ENCODE measurements at regions of chr3 and their contacts with region 1.

Region 1: GRCh38 chr3:50192689-50193141 is 1.3 kb downstream of the GNAT1 start:
- DNase-seq: peak; percentile 54
- ATAC-seq: no peak
- H3K4me3 ChIP-seq: no peak overlapping the region
- H3K27ac ChIP-seq: no peak overlapping the region
- H3K4me1 ChIP-seq: peaks cover 54% of the 10 kb centered on the region
- H3K27me3 ChIP-seq: no peaks in the 10 kb centered on the region
- CTCF ChIP-seq: peak; percentile 91
- EP300 ChIP-seq: no peak
- POLR2A ChIP-seq: no peak
- RAD21 ChIP-seq: peak; percentile 94

Region 2: GRCh38 chr3:50121416-50122032 is 71.2 kb before region 1 on chr3:
- CTCF ChIA-PET with region 1: interaction called, 50 read pairs
- POLR2A ChIA-PET with region 1: interaction called, 4 read pairs
- in situ Hi-C with region 1: loop called (anchors 5 kb)
- intact Hi-C with region 1: loop called (anchors 1 kb)
- DNase-seq: peak; percentile 70
- ATAC-seq: peak; percentile 80
- H3K4me3 ChIP-seq: no peak overlapping the region
- H3K27ac ChIP-seq: no peak overlapping the region
- H3K4me1 ChIP-seq: peaks cover 16% of the 10 kb centered on the region
- H3K27me3 ChIP-seq: peaks cover 0 to 6% of the 10 kb centered on the region in 2 experiments; a peak in 2 of 5 replicates
- CTCF ChIP-seq: peak; percentile 95
- EP300 ChIP-seq: no peak
- POLR2A ChIP-seq: peak in 1 of 2 experiments; percentile 33; a peak in 1 of 4 replicates
- RAD21 ChIP-seq: peak; percentile 93

Region 3: DNA sequence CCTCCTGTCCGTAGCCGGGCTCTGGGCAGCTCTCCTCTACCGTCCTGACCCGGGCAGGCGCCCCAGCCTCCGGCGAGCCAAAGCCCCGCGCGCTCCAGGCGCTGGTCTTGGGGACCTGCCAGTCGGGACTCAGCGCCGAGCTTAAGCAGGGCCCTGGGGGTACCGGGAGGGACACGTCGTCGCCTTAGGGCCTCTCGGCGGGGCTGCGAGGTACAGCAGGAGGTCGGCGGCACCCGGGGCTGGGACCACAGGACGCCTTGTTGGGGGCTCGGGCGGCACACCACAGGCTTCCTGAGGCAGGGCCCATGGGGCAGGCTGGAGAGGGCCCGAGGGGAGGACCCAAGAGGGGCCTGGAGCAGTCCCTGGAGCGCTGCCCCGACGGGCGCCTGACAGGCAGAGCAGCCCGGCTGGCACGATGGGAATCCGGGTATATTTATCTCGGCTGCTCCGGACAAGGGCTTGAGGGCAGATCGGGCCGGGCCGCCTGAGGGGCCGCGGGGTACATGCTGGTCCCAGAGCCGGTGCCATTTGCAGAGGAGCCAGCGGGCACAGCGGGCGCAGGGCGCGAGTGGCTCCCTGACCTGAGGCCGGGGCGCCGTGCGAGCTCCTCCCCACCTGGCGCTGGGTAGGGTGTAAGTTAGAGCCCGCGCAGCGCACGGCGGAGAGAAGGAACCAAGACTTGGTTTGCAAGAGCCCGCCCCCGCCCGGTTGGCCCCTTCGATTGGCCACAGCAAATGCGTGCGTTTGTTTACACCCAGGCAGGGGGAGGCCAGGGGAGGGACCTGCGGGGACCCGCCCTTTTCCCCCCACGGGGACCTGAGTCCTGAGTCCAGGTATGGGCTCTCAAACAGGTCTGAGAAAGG is 12.9 kb after region 1 on chr3:
- CTCF ChIA-PET with region 1: interaction called, 15 read pairs
- POLR2A ChIA-PET with region 1: interaction called, 844 read pairs
- in situ Hi-C with region 1: no loop called
- intact Hi-C with region 1: loop called (anchors 1 kb)
- DNase-seq: peak; percentile 73
- ATAC-seq: peak; percentile 20
- H3K4me3 ChIP-seq: peak overlapping the region; percentile 79 to 93 (median 85)
- H3K27ac ChIP-seq: peak overlapping the region; percentile 99
- H3K4me1 ChIP-seq: peaks cover 87% of the 10 kb centered on the region
- H3K27me3 ChIP-seq: no peaks in the 10 kb centered on the region
- CTCF ChIP-seq: 0 out of 2 replicates have a peak, but pooled peaks have one; percentile 3
- EP300 ChIP-seq: 0 out of 4 replicates have a peak, but pooled peaks of 1 of the 2 experiments have one; percentile 24
- POLR2A ChIP-seq: peak in 1 of 2 experiments; percentile 62; a peak in 2 of 4 replicates
- RAD21 ChIP-seq: 0 out of 2 replicates have a peak, but pooled peaks have one; percentile 43

Region 4: GRCh38 chr3:50227390-50228183 is 34.9 kb after region 1 on chr3:
- CTCF ChIA-PET with region 1: interaction called, 265 read pairs
- POLR2A ChIA-PET with region 1: interaction called, 625 read pairs
- in situ Hi-C with region 1: loop called (anchors 5 kb)
- intact Hi-C with region 1: loop called (anchors 1 kb)
- DNase-seq: peak; percentile 82
- ATAC-seq: peak; percentile 78
- H3K4me3 ChIP-seq: peak overlapping the region; percentile 75 to 88 (median 84)
- H3K27ac ChIP-seq: peak overlapping the region; percentile 70
- H3K4me1 ChIP-seq: peaks cover 73% of the 10 kb centered on the region
- H3K27me3 ChIP-seq: no peaks in the 10 kb centered on the region
- CTCF ChIP-seq: peak; percentile 89
- EP300 ChIP-seq: peak; percentile 20 to 47; a peak in 2 of 4 replicates
- POLR2A ChIP-seq: no peak
- RAD21 ChIP-seq: peak; percentile 99

Region 5: DNA sequence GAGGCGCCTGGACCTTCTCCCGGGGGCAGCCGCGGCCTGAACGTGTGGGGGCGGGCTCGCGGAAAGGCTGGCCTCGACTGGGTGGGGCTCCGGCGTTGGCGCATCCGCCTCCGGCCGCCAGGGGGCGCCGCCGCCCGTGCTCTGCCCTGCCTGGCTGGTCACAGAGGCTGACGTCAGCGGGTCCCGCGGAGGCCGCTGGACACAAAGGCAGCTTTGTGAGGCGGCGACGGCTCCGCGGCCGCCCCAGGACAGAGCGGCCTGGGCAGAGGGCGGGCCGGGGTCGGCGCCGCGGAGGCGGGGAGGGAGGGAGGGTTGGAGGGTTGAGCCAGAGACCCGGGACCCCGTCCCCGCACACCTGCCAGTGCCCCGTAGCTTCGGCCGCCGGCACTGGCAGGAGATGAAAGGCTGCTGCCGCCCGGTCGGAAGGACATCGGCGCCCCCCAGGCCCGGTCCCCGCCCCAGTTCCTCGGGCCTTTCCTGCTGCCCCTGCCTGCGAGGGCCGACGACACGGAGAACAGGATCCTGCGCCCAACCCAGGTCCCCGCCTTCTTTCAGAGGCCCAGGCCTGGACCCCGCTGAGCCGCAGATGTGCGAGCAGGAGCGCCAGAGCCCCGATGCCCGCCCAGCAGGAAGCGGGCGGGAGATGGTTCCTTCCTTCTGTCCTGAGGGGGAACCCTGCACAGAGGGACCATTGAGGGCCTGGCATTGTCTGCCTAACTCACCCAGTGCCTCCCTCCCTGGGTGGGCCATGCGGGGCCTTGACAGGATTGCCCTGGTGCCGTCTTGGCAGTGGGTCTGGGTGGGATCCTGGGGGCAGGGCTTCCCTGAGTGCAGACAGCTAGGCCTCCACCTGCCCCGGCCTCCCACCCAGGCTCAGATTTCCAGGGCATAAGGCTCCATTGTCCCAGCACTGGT is 67.6 kb after region 1 on chr3:
- CTCF ChIA-PET with region 1: interaction called, 5 read pairs
- POLR2A ChIA-PET with region 1: interaction called, 27 read pairs
- in situ Hi-C with region 1: no loop called
- intact Hi-C with region 1: no loop called
- DNase-seq: peak; percentile 91
- ATAC-seq: peak; percentile 67
- H3K4me3 ChIP-seq: peak overlapping the region; percentile 50 to 76 (median 62); a peak in 5 of 6 replicates
- H3K27ac ChIP-seq: peak overlapping the region; percentile 99
- H3K4me1 ChIP-seq: peaks cover 60% of the 10 kb centered on the region
- H3K27me3 ChIP-seq: no peaks in the 10 kb centered on the region
- CTCF ChIP-seq: peak; percentile 92
- EP300 ChIP-seq: peak; percentile 85 to 92; a peak in 3 of 4 replicates
- POLR2A ChIP-seq: peak in 1 of 2 experiments; percentile 54; a peak in 1 of 4 replicates
- RAD21 ChIP-seq: peak; percentile 100

Region 6: GRCh38 chr3:50292159-50293078 is 99.7 kb after region 1 on chr3 and contains the start of gene IFRD2:
- CTCF ChIA-PET with region 1: no interaction called
- POLR2A ChIA-PET with region 1: interaction called, 10 read pairs
- in situ Hi-C with region 1: no loop called
- intact Hi-C with region 1: no loop called
- DNase-seq: peak; percentile 95
- ATAC-seq: peak; percentile 91
- H3K4me3 ChIP-seq: peak within 1 kb of the TSS; percentile 60 to 92 (median 85)
- H3K27ac ChIP-seq: peak within 1 kb of the TSS; percentile 73
- H3K4me1 ChIP-seq: peaks cover 33% of the 10 kb centered on the region
- H3K27me3 ChIP-seq: no peaks in the 10 kb centered on the region
- CTCF ChIP-seq: peak; percentile 53
- EP300 ChIP-seq: peak in 1 of 2 experiments; percentile 44; a peak in 2 of 4 replicates
- POLR2A ChIP-seq: peak in 1 of 2 experiments; percentile 73; a peak in 2 of 4 replicates
- RAD21 ChIP-seq: peak; percentile 31; the same call in 1 of the 2 replicates
- total RNA-seq, gene IFRD2: 81.4 and 96.1 TPM in 2 replicates

Region 7: GRCh38 chr3:50427984-50428633 is 235.4 kb after region 1 on chr3:
- CTCF ChIA-PET with region 1: no interaction called
- POLR2A ChIA-PET with region 1: no interaction called
- in situ Hi-C with region 1: no loop called
- intact Hi-C with region 1: no loop called
- DNase-seq: no peak
- ATAC-seq: no peak
- H3K4me3 ChIP-seq: no peak overlapping the region
- H3K27ac ChIP-seq: no peak overlapping the region
- H3K4me1 ChIP-seq: peaks cover 16% of the 10 kb centered on the region
- H3K27me3 ChIP-seq: peaks cover 4 to 36% of the 10 kb centered on the region in 2 experiments; a peak in 2 of 5 replicates
- CTCF ChIP-seq: no peak
- EP300 ChIP-seq: no peak
- POLR2A ChIP-seq: no peak
- RAD21 ChIP-seq: no peak

Measured in HepG2 (cell line).